Heart left ventricle (tissue), 16 donors: ENCODE measurements at regions of chr4 and their contacts with region 1.

Region 1: GRCh38 chr4:54999003-54999402 is 126.4 kb downstream of the KDR start:
- DNase-seq: no peak
- ATAC-seq: peak in 1 of 4 donors; percentile 74
- H3K4me3 ChIP-seq: no peak overlapping the region
- H3K27ac ChIP-seq: no peak overlapping the region
- H3K4me1 ChIP-seq: peaks cover 0 to 7% (median 2%) of the 10 kb centered on the region in 12 donors
- H3K27me3 ChIP-seq: no peaks in the 10 kb centered on the region
- CTCF ChIP-seq: peak; percentile 25 to 70 (median 58)
- POLR2A ChIP-seq: no peak

Region 2: DNA sequence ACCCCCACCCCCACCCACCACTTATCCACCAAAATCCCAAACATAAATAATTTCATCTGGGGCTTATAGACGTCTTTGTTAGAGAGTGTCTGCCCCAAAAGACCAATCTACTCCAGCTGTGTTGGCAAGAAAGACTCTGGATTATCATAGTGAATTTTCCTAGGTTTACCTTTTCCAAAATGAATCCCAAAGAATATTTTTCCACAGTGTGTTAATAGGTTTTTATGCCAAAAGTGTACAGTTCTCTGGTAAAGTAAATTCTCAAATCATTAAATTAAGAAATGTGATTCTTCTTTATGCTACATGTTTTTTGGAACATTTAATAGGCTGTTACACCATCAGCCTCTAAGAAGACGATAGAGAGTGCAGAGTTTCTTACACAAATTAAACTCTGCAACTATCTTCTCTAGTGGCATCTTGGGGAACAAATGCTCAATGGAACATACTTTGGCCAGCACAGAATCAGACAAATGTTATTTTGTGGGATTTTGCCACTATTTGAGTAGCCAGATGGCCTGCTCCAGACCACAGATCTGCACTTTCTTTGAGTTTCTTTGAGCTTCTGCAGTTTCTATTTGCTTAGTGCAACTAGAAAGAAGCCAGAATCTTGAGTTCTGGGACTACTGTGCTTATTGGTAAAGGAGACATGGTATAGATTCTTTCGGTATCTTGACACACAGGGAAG is 135.3 kb before region 1 on chr4:
- intact Hi-C with region 1: no loop called
- DNase-seq: no peak
- ATAC-seq: no peak
- H3K4me3 ChIP-seq: no peak overlapping the region
- H3K27ac ChIP-seq: no peak overlapping the region
- H3K4me1 ChIP-seq: peaks cover 0 to 7% (median 0%) of the 10 kb centered on the region in 12 donors
- H3K27me3 ChIP-seq: no peaks in the 10 kb centered on the region
- CTCF ChIP-seq: no peak
- POLR2A ChIP-seq: no peak

Region 3: GRCh38 chr4:55336136-55337034 is 337.4 kb after region 1 on chr4:
- intact Hi-C with region 1: loop called in 1 of 10 experiments (anchors 5 kb)
- DNase-seq: no peak
- ATAC-seq: no peak
- H3K4me3 ChIP-seq: no peak overlapping the region
- H3K27ac ChIP-seq: no peak overlapping the region
- H3K4me1 ChIP-seq: no peaks in the 10 kb centered on the region
- H3K27me3 ChIP-seq: no peaks in the 10 kb centered on the region
- CTCF ChIP-seq: no peak
- POLR2A ChIP-seq: no peak